Activated CD4-positive, alpha-beta memory T cell treated with anti-CD3 and anti-CD28 coated beads for 36 hours (primary cell): ENCODE measurements at regions of chr1 and their contacts with region 1.

Region 1: DNA sequence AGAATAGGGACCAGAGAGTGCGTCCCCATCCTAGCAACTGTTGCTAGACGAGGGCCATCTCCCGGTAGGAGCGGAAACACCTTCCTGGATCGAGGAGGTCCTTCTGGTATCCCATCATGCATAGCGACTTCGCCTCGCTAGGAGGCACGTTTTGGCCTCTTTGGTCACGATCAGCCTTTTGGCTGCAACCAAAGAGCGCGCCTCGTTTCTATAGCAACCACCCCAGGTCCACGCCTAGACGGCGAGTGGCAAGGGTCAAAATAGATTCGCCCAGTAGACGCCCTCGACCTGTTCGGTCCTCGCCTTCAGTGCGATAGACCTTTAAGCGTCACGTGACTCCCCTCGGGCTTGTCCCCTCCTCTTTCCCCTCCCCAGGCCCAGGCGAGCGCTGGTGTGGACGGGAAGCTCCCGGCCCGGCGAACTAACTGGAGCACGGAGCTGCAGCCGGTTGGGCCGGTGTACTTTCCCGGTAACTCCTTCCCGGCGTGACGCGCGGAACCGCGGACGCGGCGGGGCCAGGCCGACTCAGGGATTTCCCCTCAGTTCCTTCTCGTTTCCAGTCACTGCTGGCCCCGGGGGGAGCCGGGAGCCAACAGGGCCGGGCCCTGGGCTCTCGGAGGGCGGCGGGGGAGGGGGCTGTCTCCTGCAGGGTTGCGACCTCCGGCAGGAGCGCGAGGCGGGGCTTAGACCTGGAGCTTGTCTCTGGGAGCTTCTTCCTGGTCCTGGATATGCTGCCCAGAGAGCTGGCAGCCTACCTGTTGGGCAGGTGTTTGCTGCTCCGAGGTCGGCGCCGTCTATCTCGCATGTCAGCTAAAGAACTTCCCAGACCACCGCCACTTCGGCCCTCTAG is at the start of gene DNAJC16:
- DNase-seq: peak; percentile 99
- H3K4me3 Mint-ChIP-seq: peak within 1 kb of the TSS; percentile 89
- H3K27ac Mint-ChIP-seq: peak within 1 kb of the TSS; percentile 99
- H3K4me1 Mint-ChIP-seq: peaks cover 50% of the 10 kb centered on the region
- H3K27me3 Mint-ChIP-seq: no peaks in the 10 kb centered on the region
- total RNA-seq, gene DNAJC16: 10.0 to 10.4 TPM

Region 2: DNA sequence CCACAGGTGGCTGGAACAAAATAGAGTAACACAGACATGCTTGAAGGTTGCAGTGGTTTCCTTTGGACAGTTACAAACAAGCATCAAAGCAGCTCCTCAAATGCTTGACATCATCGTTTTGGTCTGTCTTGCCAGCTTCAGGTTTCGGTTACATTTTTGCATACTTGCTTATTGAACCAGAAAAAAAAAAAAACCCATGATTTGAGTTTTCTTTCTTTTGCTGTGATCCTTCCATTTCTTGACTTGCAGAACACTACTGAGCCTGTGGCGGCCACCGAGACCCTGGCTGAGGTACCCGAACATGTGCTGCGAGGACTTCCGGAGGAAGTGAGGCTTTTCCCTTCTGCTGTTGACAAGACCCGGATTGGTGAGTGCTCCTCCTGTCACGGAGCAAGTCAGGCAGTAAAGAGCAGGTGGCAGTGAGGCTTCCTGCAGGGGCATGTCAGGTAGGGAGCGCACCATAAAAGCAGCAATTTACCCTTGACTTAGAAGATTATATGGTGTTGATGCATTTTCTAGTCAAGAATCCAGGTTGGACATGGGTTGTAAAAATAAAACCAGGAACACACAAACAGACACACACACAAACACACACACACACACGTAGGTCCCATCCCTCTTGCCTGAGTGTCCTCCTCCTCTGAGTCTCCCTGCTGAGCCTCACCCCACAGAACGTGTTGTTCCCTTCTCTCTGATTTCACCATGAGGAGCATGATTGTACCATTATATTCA is 1795.8 kb before region 1 on chr1:
- CTCF ChIA-PET with region 1: no interaction called
- POLR2A ChIA-PET with region 1: no interaction called
- intact Hi-C with region 1: loop called (anchors 5 kb)
- DNase-seq: peak; percentile 92
- H3K4me3 Mint-ChIP-seq: peak overlapping the region; percentile 81
- H3K27ac Mint-ChIP-seq: peak overlapping the region; percentile 98
- H3K4me1 Mint-ChIP-seq: peaks cover 67% of the 10 kb centered on the region
- H3K27me3 Mint-ChIP-seq: no peaks in the 10 kb centered on the region

Region 3: DNA sequence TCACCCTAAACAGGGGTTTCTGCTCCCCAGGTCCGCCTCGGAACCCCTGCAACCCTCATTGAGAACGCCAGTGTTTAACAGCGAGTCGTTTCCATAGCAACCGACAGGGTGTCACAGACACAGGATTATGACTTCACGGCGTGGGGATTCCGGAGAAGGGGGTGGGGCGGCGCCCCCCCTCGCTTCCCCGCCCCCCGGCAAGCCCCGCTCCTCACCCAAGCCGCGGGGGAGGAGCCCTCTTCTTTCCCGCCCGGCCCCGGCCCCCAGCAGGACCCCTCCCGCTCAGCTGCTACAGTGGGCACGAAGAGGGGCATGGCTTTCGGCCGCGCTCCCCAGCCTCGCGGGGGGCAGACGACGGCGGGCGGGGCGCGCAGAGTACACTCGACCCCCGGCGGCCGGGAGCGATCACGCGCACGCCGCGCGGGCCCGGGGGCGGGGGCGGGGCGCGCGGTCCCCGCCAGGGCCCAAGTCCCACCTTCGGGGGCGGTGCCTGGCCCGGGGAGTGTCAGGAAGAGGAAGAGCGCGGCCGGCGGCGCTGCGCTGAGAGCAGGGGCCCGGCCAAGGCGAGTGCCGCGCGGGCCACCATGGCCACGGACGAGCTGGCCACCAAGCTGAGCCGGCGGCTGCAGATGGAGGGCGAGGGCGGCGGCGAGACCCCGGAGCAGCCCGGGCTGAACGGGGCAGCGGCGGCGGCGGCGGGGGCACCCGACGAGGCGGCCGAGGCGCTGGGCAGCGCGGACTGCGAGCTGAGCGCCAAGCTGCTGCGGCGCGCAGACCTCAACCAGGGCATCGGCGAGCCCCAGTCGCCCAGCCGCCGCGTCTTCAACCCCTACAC is 117.1 kb before region 1 on chr1 and contains the start of gene EFHD2:
- CTCF ChIA-PET with region 1: no interaction called
- POLR2A ChIA-PET with region 1: no interaction called
- intact Hi-C with region 1: loop called (anchors 2 kb)
- DNase-seq: peak; percentile 86
- H3K4me3 Mint-ChIP-seq: peak within 1 kb of the TSS; percentile 92
- H3K27ac Mint-ChIP-seq: peak within 1 kb of the TSS; percentile 81
- H3K4me1 Mint-ChIP-seq: peaks cover 34% of the 10 kb centered on the region
- H3K27me3 Mint-ChIP-seq: no peaks in the 10 kb centered on the region
- total RNA-seq, gene EFHD2: 60.4 to 61.3 TPM

Region 4: DNA sequence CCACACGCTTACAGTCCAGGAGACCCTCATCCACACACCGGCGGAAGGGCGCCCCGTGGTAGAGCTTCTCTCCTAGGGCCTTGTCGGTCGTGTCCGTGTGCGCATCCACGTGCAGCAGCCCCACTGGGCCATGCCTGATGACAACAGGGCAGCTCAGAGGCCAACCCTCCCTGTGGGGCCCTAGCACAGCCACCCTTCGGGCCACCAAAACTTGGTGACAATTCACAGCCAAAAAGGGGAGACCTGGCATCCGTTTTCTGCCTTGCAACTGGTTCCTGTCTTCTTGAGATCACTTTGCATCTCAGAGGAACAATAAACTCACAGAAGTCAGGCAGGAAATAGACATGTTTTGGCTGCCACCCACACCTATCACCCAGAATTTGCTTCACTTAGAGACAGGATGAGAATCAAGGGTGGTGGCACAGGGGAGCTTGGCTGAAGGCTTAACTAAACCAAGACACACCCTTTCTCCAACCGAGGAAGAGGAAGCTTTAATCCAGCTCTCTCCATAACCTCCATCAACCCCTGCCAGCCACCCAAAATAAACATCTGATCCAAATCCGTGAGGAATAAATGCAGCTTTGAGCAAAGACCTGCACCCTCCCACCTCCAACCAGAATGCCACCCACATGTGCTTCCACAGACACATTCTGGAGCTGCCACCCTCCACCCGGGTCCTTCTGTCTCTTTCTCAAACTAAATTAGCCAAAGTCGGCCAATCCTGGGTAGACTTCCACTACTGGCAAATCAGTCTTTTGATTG is 52.4 kb after region 1 on chr1:
- CTCF ChIA-PET with region 1: no interaction called
- POLR2A ChIA-PET with region 1: no interaction called
- intact Hi-C with region 1: loop called (anchors 2 kb)
- DNase-seq: peak; percentile 64
- H3K4me3 Mint-ChIP-seq: peak overlapping the region; percentile 48
- H3K27ac Mint-ChIP-seq: peak overlapping the region; percentile 97
- H3K4me1 Mint-ChIP-seq: peaks cover 44% of the 10 kb centered on the region
- H3K27me3 Mint-ChIP-seq: no peaks in the 10 kb centered on the region

Region 5: DNA sequence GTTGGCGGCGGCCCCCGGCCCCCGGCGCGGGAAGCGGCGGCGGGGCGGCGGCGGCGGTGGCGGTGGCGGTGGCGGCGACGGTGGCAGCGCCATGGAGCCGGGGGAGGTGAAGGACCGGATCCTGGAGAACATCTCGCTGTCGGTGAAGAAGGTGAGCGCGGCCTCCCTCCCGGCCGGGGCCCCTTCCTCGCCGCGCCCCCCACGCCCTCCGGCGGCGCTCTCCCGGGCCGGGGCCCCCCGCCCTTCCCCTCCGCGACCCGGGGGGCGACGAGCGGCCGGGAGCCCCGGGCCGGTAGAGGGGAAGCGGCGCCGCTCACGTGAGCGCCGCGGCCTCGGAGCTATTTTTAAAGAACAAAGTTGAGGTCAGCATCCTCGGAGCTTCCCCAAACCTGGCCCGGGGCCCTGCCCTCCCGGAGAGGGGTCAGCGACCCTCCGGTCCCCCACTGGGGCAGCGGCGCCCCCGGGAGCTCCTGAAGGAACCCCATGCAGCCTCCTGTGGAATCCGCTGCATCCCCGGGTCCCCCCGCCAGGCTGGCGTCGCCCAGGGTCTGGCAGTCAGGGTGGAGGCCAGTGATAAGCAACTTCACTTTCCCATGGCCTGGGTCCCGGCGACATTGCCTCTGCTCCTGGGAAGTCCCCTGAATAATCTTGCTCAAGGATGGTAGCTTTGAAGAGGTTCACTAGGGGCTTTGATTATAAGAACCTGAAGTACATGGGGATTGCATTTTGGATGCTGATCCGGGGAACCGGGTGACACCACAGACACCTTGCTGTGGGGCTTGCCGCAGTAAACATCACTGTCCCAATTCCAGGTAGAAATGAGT is 158.0 kb after region 1 on chr1:
- CTCF ChIA-PET with region 1: no interaction called
- POLR2A ChIA-PET with region 1: interaction called, 3 read pairs
- intact Hi-C with region 1: loop called (anchors 5 kb)
- DNase-seq: peak; percentile 50
- H3K4me3 Mint-ChIP-seq: peak overlapping the region; percentile 86
- H3K27ac Mint-ChIP-seq: peak overlapping the region; percentile 87
- H3K4me1 Mint-ChIP-seq: peaks cover 39% of the 10 kb centered on the region
- H3K27me3 Mint-ChIP-seq: no peaks in the 10 kb centered on the region

Region 6: GRCh38 chr1:15966081-15966955 is 439.6 kb after region 1 on chr1:
- CTCF ChIA-PET with region 1: no interaction called
- POLR2A ChIA-PET with region 1: no interaction called
- intact Hi-C with region 1: loop called (anchors 5 kb)
- DNase-seq: peak; percentile 94
- H3K4me3 Mint-ChIP-seq: peak overlapping the region; percentile 74
- H3K27ac Mint-ChIP-seq: peak overlapping the region; percentile 100
- H3K4me1 Mint-ChIP-seq: peaks cover 81% of the 10 kb centered on the region
- H3K27me3 Mint-ChIP-seq: no peaks in the 10 kb centered on the region

Region 7: DNA sequence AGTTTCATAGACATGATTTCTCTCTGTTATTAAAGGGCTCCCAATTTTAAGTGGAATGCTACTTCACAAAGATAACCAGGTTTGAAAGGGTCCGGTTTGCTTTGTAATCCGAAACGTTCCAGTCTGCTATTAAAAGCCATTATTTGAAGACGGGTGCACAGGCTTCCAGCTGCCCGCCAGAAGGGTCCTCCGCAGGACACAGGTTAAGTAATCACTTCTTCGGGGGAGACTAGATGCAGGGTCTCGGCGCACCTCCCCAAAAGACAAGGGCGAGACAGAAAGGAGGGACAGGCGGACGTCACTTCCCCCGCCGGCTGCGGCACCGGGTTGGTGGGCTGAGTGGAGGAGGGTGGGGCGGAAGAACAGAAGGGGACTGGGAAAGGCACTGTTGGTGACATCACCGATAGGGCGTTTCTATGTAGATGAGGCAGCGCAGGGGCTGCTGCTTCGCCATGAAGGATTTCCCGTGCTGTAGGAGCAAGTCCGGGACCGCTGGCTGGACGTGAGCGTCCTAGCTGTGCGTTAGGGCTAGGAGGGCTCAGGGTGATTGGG is 1377.9 kb after region 1 on chr1:
- CTCF ChIA-PET with region 1: no interaction called
- POLR2A ChIA-PET with region 1: interaction called, 3 read pairs
- intact Hi-C with region 1: loop called (anchors 10 kb)
- DNase-seq: peak; percentile 100
- H3K4me3 Mint-ChIP-seq: no peak overlapping the region
- H3K27ac Mint-ChIP-seq: no peak overlapping the region
- H3K4me1 Mint-ChIP-seq: peaks cover 25% of the 10 kb centered on the region
- H3K27me3 Mint-ChIP-seq: no peaks in the 10 kb centered on the region